Lower leg skin (tissue), 4 donors: ENCODE measurements at regions of chr5 and their contacts with region 1.

Region 1: GRCh38 chr5:82165740-82166530 is 112.2 kb downstream of the RPS23 start:
- DNase-seq: peak; percentile 84 to 89
- H3K4me3 ChIP-seq: no peak overlapping the region
- CTCF ChIP-seq: no peak
- POLR2A ChIP-seq: no peak

Region 2: DNA sequence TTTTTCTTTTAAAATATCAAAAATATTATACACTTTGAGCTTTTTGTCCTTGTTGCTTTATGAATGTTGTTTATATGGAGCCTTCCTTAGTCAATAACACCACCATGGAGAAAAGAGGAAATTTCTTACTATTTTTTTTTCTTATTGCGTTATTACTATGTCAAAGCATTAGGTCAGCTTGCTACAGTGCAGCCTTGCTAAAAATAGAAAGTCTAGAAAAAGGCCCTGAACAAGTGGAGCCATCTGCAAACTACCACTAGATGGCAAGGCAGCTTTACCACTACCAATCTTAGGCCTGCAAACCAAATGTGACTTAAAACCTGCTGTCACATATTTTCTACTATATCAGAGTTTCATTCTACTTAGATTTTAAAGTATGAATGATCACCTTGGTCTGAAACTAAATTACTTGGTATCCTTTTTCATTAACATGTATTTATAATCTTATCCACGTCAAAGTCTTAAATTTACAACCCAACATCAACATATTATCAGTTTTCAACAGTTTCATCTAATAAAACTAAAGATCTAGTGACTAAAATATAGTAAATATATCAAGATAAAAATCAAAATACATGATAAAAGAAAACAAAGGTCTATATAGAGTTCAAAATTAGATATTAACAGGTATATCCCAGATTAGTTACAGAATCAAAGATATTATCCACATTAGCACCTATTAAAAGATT is 658.9 kb before region 1 on chr5:
- intact Hi-C with region 1: loop called (anchors 5 kb)
- DNase-seq: peak in 1 of 2 donors; percentile 58
- H3K4me3 ChIP-seq: no peak overlapping the region
- CTCF ChIP-seq: peak in 1 of 3 donors; percentile 70
- POLR2A ChIP-seq: no peak

Region 3: DNA sequence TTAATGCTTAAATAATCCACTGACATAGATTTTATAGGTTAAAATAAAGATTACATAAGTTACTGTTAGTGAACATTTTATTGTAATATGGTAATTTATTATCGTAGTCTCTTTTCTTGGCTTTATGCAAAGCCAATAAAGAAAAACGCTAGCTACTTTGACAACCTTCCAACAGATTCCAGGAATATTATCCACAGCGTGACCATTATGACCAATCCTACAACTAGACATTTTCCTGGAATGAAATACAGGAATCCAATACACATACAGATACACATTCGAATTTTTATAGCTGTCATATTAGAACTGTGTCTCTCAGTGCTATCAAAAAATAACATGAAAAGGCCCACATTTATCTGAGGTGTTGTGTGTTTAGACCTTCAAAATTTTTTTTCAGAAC is 99.1 kb after region 1 on chr5:
- intact Hi-C with region 1: no loop called
- DNase-seq: no peak
- H3K4me3 ChIP-seq: no peak overlapping the region
- CTCF ChIP-seq: no peak
- POLR2A ChIP-seq: no peak